Lower leg skin (tissue), 4 donors: ENCODE measurements at regions of chr18 and their contacts with region 1.

Region 1: DNA sequence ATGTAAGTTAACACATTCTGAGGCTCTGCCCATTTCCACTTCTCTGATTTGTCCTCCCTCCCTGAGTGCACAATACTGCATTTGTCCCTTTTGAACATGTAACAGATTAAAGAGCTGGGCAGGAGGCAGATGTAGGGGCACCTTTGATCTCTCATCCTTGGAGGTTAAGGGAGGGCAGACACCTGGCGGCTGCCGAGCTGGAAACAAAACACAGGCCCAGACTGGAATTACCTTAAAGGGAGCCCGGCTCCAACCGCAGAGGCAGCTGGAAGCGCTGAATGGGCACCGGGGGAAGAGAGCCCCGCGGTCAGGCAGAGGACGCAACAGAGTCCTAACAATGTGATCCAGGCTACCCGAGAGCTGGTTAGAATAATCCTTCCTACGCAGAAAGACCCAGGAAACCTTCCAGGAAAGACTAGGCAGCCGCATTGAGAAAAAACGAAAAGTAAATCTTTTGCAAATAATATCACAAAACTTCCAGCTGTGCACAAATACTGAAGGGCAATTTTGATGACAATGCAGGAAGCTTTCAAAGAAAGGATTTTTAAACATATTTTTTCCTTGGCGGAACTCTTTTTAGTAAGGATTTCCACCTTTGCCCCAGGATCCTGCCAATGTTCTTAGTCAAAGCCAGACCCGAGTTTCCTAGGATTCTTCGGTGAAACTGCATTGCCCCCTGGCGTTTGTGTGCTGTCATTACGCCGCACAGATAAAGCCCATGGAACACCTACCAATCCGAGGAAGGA is 216.0 kb downstream of the TGIF1 start:
- DNase-seq: peak; percentile 84 to 96
- H3K4me3 ChIP-seq: no peak overlapping the region
- CTCF ChIP-seq: peak in 1 of 3 donors; percentile 91
- POLR2A ChIP-seq: no peak

Region 2: GRCh38 chr18:2644535-2644934 is 1021.4 kb before region 1 on chr18:
- intact Hi-C with region 1: no loop called
- DNase-seq: no peak
- H3K4me3 ChIP-seq: no peak overlapping the region
- CTCF ChIP-seq: no peak
- POLR2A ChIP-seq: no peak

Region 3: DNA sequence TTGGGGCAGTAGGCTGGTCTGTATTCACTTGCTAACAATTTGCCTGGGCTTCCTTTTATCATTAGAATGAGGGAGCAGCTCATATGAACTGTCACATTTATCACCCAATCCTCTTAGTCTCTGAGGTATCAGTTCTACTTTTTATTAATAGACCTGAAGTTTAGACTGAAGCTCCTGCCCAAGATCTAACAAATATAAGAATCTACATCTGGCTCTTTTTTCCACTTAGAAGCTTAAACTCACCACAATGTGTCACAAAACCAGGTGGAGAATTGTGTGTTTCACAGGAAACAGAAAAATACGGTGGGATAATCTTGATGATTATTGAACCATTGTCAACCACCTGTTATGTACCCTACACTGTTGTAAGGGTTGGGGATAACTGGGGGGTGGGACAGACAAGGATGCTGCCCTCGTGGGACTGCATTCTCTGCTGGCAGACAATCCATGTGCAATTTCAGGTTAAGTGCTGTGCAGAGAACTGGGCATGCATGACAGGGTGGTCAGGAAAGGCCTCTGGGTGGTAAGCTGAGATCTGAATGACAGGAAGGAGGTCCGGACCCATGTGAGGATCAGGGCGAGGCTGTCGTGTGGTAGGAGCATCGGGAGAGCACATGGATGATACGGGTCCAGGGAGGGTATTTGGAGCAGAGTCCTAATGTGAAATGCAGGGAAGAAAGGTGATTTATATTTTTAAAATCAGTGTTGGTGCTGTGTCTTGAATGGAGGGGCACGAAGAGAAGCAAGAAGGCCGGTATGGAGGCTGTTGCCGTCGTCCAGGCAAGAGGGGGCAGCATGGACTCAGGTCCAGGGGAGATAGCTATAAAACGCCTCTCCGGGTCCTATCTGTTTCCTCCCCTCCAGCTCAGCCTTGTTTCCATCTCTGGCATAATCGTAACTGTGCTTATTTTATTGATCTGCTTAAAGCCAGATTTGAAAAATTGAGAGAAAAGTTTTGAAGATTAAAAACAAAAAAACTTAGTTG is 386.5 kb before region 1 on chr18:
- intact Hi-C with region 1: loop called (anchors 2 kb)
- DNase-seq: no peak
- H3K4me3 ChIP-seq: no peak overlapping the region
- CTCF ChIP-seq: no peak
- POLR2A ChIP-seq: no peak

Region 4: GRCh38 chr18:3579701-3580100 is 86.3 kb before region 1 on chr18:
- intact Hi-C with region 1: loop called (anchors 5 kb)
- DNase-seq: no peak
- H3K4me3 ChIP-seq: no peak overlapping the region
- CTCF ChIP-seq: no peak
- POLR2A ChIP-seq: no peak

Region 5: GRCh38 chr18:3985664-3986063 is 319.7 kb after region 1 on chr18:
- intact Hi-C with region 1: no loop called
- DNase-seq: no peak
- H3K4me3 ChIP-seq: no peak overlapping the region
- CTCF ChIP-seq: no peak
- POLR2A ChIP-seq: no peak